CD4-positive, alpha-beta T cell (primary cell): ENCODE measurements at regions of chr2 and their contacts with region 1.

Region 1: GRCh38 chr2:72993147-72993932 is 76.0 kb downstream of the EMX1 start:
- DNase-seq: peak in 12 of 14 experiments; percentile 6 to 76 (median 36)
- ATAC-seq: peak; percentile 49
- H3K4me3 ChIP-seq: no peak overlapping the region
- H3K4me3 Mint-ChIP-seq: no peak overlapping the region
- H3K27ac ChIP-seq: no peak overlapping the region
- H3K27ac Mint-ChIP-seq: no peak overlapping the region
- H3K4me1 ChIP-seq: no peaks in the 10 kb centered on the region
- H3K4me1 Mint-ChIP-seq: no peaks in the 10 kb centered on the region
- H3K27me3 ChIP-seq: no peaks in the 10 kb centered on the region
- H3K27me3 Mint-ChIP-seq: no peaks in the 10 kb centered on the region
- CTCF ChIP-seq: peak; percentile 88

Region 2: DNA sequence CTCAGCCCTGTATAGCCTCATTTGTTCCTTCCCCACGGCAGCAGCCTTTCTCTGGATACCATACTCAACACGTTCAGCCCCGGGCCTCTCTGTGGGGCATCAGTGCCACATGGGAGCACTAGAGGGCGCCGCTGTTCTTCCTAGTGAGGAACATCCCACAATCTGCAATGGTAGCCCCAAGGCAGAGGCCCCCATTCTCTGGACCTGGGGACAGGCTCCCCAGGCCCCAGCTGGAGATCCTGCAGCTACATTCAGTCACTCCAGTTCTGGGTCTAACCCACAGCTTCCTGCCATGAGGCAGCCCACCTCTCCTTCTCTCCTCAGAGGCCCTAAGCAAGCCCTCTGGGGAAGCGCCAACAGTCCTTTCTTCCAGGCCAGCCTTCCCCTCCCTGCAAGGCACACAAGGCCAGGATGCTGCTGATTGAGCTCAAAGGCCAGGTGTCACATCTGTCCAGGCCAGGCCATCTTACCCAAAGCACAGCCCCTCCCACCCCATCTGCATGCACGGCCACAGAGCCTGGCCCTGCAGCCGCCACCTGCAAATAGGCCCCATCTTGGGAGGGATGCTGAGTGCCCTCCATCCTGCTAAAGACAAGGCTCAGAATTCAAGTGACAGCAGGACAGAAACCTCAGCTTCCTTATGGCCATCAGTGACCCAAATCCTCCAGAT is 92.5 kb after region 1 on chr2:
- CTCF ChIA-PET with region 1: no interaction called
- POLR2A ChIA-PET with region 1: no interaction called
- intact Hi-C with region 1: loop called in 1 of 2 experiments (anchors 5 kb)
- DNase-seq: peak; percentile 73 to 89 (median 78)
- ATAC-seq: peak; percentile 96
- H3K4me3 ChIP-seq: no peak overlapping the region
- H3K4me3 Mint-ChIP-seq: no peak overlapping the region
- H3K27ac ChIP-seq: no peak overlapping the region
- H3K27ac Mint-ChIP-seq: no peak overlapping the region
- H3K4me1 ChIP-seq: peaks cover 3% of the 10 kb centered on the region
- H3K4me1 Mint-ChIP-seq: no peaks in the 10 kb centered on the region
- H3K27me3 ChIP-seq: no peaks in the 10 kb centered on the region
- H3K27me3 Mint-ChIP-seq: no peaks in the 10 kb centered on the region
- CTCF ChIP-seq: peak; percentile 89